Heart right ventricle (tissue), 16 donors: ENCODE measurements at regions of chr7 and their contacts with region 1.

Region 1: DNA sequence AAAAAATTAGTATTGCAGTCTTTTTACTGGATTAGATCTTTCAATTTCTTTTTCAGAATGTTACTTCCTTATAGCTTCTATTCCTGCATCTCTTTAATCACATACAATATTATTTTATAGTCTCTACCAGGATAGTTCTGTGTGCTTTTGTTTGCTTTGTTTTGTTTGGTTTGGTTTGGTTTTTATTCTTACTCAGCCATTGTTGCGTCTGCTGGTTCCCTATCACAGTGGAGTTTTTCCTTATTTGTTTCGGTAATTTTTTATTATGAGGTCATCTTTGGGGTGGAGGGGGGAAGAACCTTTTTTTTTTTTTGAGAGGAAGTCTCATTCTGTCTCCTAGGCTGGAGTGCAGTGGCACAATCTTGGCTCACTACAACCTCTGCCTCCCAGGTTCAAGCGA is 9.0 kb upstream of the BAIAP2L1 start:
- DNase-seq: no peak
- ATAC-seq: no peak
- H3K4me3 ChIP-seq: no peak overlapping the region
- H3K27ac ChIP-seq: no peak overlapping the region
- H3K4me1 ChIP-seq: no peaks in the 10 kb centered on the region
- H3K27me3 ChIP-seq: peaks cover 0 to 16% (median 0%) of the 10 kb centered on the region in 7 donors
- CTCF ChIP-seq: no peak

Region 2: GRCh38 chr7:97697396-97697795 is 712.4 kb before region 1 on chr7:
- intact Hi-C with region 1: no loop called
- DNase-seq: no peak
- ATAC-seq: no peak
- H3K4me3 ChIP-seq: no peak overlapping the region
- H3K27ac ChIP-seq: no peak overlapping the region
- H3K4me1 ChIP-seq: no peaks in the 10 kb centered on the region
- H3K27me3 ChIP-seq: no peaks in the 10 kb centered on the region
- CTCF ChIP-seq: no peak

Region 3: DNA sequence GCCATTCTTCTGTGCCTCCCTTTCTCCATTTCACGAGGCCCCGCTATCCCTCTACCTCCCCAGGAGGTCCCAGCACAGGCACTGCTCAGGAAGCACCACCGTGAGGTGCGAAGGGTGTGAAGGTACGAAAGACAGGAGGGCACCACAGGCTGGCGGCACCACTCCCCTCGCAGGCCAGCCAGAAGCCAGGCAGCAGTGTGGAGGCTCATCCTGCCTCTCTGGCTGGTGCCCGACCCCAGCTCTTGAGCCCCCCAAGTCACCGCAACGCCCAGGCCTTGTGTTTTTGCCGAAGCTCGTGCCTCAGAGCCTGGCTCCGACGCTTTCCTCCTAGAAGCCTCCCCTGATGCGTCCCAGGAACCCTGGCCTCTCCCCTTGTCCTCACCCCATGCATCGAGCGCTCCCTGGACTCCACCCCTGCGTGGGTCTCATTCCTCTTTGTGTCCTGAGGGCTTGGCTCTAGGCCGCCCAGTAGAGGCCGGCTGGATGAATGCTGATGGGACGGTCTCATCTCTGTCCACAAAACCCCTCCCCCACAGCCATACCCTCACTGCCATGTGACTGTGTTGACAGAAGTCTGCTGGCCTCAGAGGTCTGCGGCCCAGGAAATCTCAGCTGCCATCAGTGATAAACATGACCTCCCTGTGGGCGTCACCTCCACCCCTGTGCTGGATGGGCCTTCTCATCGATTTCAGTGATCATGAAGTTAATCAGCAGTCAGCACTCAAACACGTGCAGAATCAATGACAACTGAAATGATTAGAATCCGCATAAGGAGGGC is 109.1 kb before region 1 on chr7:
- intact Hi-C with region 1: loop called in 3 of 10 experiments (anchors 5 to 10 kb)
- DNase-seq: no peak
- ATAC-seq: no peak
- H3K4me3 ChIP-seq: no peak overlapping the region
- H3K27ac ChIP-seq: no peak overlapping the region
- H3K4me1 ChIP-seq: peaks cover 0 to 3% (median 0%) of the 10 kb centered on the region in 9 donors
- H3K27me3 ChIP-seq: no peaks in the 10 kb centered on the region
- CTCF ChIP-seq: no peak

Region 4: DNA sequence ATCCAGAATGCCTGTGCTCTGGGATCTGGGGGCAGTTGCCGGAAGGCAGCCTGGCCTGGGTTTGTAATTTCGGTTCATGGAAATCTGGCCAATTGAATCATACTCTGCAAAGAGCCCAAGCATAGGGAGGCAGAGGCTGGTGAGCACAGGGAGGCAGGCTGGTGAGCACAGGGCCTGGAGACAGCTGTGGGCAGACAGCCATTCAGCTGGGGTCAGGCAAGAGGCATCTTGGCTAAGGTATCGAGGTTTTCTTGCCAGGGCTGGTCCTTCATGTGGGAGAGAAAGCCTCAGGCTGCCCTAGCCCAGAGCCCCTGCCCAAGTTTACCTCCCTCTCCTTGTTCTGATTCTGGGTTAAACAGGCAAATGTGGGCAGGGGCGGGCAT is 54.7 kb after region 1 on chr7:
- intact Hi-C with region 1: no loop called
- DNase-seq: no peak
- ATAC-seq: no peak
- H3K4me3 ChIP-seq: no peak overlapping the region
- H3K27ac ChIP-seq: no peak overlapping the region
- H3K4me1 ChIP-seq: no peaks in the 10 kb centered on the region
- H3K27me3 ChIP-seq: peaks cover 0 to 61% (median 5%) of the 10 kb centered on the region in 7 donors
- CTCF ChIP-seq: no peak

Region 5: GRCh38 chr7:98662289-98662688 is 252.4 kb after region 1 on chr7:
- intact Hi-C with region 1: no loop called
- DNase-seq: no peak
- ATAC-seq: no peak
- H3K4me3 ChIP-seq: no peak overlapping the region
- H3K27ac ChIP-seq: no peak overlapping the region
- H3K4me1 ChIP-seq: no peaks in the 10 kb centered on the region
- H3K27me3 ChIP-seq: peaks cover 0 to 17% (median 4%) of the 10 kb centered on the region in 7 donors
- CTCF ChIP-seq: no peak